Activated CD4-positive, alpha-beta T cell treated with anti-CD3 and anti-CD28 coated beads for 36 hours (primary cell): ENCODE measurements at regions of chr6 and their contacts with region 1.

Region 1: DNA sequence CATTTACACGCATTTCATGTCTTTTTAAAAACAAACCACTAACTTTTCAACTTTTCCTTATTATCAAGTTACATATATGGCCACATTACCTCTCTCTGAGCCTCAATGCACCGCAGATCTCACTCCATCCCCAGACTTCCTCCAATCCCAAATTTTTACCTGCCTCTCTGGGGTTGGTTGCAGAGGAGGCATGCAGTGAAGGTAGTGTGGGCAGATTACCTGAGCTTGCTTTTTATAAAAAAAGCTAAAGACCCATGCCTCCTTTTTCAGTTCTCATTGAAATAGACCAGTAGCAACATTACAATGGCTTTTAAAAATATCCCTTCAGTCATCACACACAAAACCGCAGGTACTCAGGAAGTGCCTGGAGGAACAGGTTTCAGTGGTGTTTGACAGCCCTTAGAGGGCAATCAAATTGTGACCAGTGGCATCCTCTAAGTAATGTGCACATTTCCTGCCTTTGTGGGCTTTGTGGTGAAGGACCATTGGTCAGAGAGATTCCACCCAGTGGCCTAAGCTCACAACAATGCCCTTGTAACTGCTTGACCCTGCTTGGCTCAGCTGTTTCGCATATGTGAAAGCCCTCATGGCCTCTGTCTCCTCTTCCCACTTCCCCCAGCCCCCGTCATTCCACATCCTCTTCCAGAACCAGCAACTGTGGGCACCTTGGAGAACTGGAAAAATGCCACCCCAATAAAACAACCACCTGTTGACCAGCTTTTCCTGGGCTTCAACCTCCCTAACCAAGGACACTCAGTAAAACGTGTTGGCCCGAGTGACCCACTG is 30.2 kb upstream of the IL17A start:
- DNase-seq: peak; percentile 16
- ATAC-seq: no peak
- H3K4me3 Mint-ChIP-seq: peak overlapping the region; percentile 9
- H3K27ac Mint-ChIP-seq: peak overlapping the region; percentile 97
- H3K4me1 Mint-ChIP-seq: peaks cover 54% of the 10 kb centered on the region
- H3K27me3 Mint-ChIP-seq: peaks cover 10% of the 10 kb centered on the region

Region 2: GRCh38 chr6:52063584-52064344 is 92.2 kb before region 1 on chr6:
- CTCF ChIA-PET with region 1: interaction called, 3 read pairs
- POLR2A ChIA-PET with region 1: no interaction called
- intact Hi-C with region 1: loop called (anchors 2 to 5 kb)
- DNase-seq: peak; percentile 79
- ATAC-seq: peak; percentile 99
- H3K4me3 Mint-ChIP-seq: no peak overlapping the region
- H3K27ac Mint-ChIP-seq: peak overlapping the region; percentile 77
- H3K4me1 Mint-ChIP-seq: peaks cover 12% of the 10 kb centered on the region
- H3K27me3 Mint-ChIP-seq: peaks cover 3% of the 10 kb centered on the region

Region 3: GRCh38 chr6:52077180-52077884 is 78.7 kb before region 1 on chr6:
- CTCF ChIA-PET with region 1: no interaction called
- POLR2A ChIA-PET with region 1: no interaction called
- intact Hi-C with region 1: no loop called
- DNase-seq: no peak
- ATAC-seq: no peak
- H3K4me3 Mint-ChIP-seq: no peak overlapping the region
- H3K27ac Mint-ChIP-seq: no peak overlapping the region
- H3K4me1 Mint-ChIP-seq: no peaks in the 10 kb centered on the region
- H3K27me3 Mint-ChIP-seq: peaks cover 32% of the 10 kb centered on the region

Region 4: GRCh38 chr6:52233975-52234823 is 78.2 kb after region 1 on chr6:
- CTCF ChIA-PET with region 1: interaction called, 7 read pairs
- POLR2A ChIA-PET with region 1: interaction called, 3 read pairs
- intact Hi-C with region 1: loop called in 1 of 2 experiments (anchors 1 kb)
- DNase-seq: peak; percentile 74
- ATAC-seq: peak; percentile 83
- H3K4me3 Mint-ChIP-seq: no peak overlapping the region
- H3K27ac Mint-ChIP-seq: no peak overlapping the region
- H3K4me1 Mint-ChIP-seq: peaks cover 21% of the 10 kb centered on the region
- H3K27me3 Mint-ChIP-seq: peaks cover 29% of the 10 kb centered on the region

Region 5: DNA sequence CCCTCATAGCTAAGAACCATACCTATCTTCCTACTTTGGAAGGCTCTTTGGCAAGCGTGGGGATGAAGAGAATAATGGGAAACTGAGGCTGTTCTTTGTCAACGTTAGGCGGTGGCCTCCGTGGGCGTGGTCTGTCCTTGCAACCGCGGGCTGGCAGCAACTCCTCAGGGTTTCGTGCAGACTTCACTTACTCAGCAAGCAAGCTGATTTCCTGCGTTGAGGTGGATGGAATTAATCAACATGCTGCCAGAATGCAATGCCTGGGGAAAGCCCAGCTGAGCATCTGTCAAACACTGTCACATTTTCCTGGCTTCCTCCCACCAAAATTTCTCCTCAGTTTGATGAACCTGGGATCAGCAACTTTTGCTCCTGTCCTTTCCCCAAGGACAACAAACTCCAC is 97.5 kb after region 1 on chr6:
- CTCF ChIA-PET with region 1: interaction called, 4 read pairs
- POLR2A ChIA-PET with region 1: no interaction called
- intact Hi-C with region 1: loop called in 1 of 2 experiments (anchors 1 kb)
- DNase-seq: peak; percentile 76
- ATAC-seq: peak; percentile 53
- H3K4me3 Mint-ChIP-seq: no peak overlapping the region
- H3K27ac Mint-ChIP-seq: peak overlapping the region; percentile 72
- H3K4me1 Mint-ChIP-seq: peaks cover 48% of the 10 kb centered on the region
- H3K27me3 Mint-ChIP-seq: peaks cover 22% of the 10 kb centered on the region

Region 6: GRCh38 chr6:52389626-52390360 is 233.8 kb after region 1 on chr6:
- CTCF ChIA-PET with region 1: interaction called, 4 read pairs
- POLR2A ChIA-PET with region 1: interaction called, 5 read pairs
- intact Hi-C with region 1: loop called (anchors 1 kb)
- DNase-seq: peak; percentile 74
- ATAC-seq: peak; percentile 52
- H3K4me3 Mint-ChIP-seq: peak overlapping the region; percentile 38
- H3K27ac Mint-ChIP-seq: peak overlapping the region; percentile 86
- H3K4me1 Mint-ChIP-seq: peaks cover 85% of the 10 kb centered on the region
- H3K27me3 Mint-ChIP-seq: no peaks in the 10 kb centered on the region

Region 7: GRCh38 chr6:53348371-53349208 is 1192.6 kb after region 1 on chr6 and contains the start of gene ELOVL5:
- CTCF ChIA-PET with region 1: no interaction called
- POLR2A ChIA-PET with region 1: no interaction called
- intact Hi-C with region 1: no loop called
- DNase-seq: peak; percentile 99
- ATAC-seq: peak; percentile 79
- H3K4me3 Mint-ChIP-seq: peak within 1 kb of the TSS; percentile 93
- H3K27ac Mint-ChIP-seq: peak within 1 kb of the TSS; percentile 91
- H3K4me1 Mint-ChIP-seq: peaks cover 46% of the 10 kb centered on the region
- H3K27me3 Mint-ChIP-seq: no peaks in the 10 kb centered on the region
- total RNA-seq, gene ELOVL5: 98.1 to 106 TPM